GM18951 (cell line): ENCODE measurements at regions of chr6 and their contacts with region 1.

Region 1: GRCh38 chr6:71375676-71376075 is 87.1 kb downstream of the OGFRL1 start:
- POLR2A ChIP-seq: no peak

Region 2: GRCh38 chr6:71433441-71433840 is 57.8 kb after region 1 on chr6:
- in situ Hi-C with region 1: no loop called
- POLR2A ChIP-seq: no peak

Region 3: GRCh38 chr6:71509191-71510005 is 133.7 kb after region 1 on chr6:
- in situ Hi-C with region 1: loop called (anchors 10 kb)
- POLR2A ChIP-seq: no peak